GM23248 (cell line): ENCODE measurements at regions of chr7 and their contacts with region 1.

Region 1: GRCh38 chr7:76314042-76314721 is 11.7 kb downstream of the HSPB1 start:
- DNase-seq: peak; percentile 93
- H3K4me3 ChIP-seq: no peak overlapping the region
- H3K27ac ChIP-seq: no peak overlapping the region
- H3K4me1 ChIP-seq: peaks cover 5% of the 10 kb centered on the region; the same call in 1 of the 2 replicates
- H3K27me3 ChIP-seq: no peaks in the 10 kb centered on the region

Region 2: GRCh38 chr7:74388880-74389415 is 1925.2 kb before region 1 on chr7:
- in situ Hi-C with region 1: no loop called
- DNase-seq: no peak
- H3K4me3 ChIP-seq: no peak overlapping the region
- H3K27ac ChIP-seq: no peak overlapping the region
- H3K4me1 ChIP-seq: no peaks in the 10 kb centered on the region
- H3K27me3 ChIP-seq: no peaks in the 10 kb centered on the region

Region 3: DNA sequence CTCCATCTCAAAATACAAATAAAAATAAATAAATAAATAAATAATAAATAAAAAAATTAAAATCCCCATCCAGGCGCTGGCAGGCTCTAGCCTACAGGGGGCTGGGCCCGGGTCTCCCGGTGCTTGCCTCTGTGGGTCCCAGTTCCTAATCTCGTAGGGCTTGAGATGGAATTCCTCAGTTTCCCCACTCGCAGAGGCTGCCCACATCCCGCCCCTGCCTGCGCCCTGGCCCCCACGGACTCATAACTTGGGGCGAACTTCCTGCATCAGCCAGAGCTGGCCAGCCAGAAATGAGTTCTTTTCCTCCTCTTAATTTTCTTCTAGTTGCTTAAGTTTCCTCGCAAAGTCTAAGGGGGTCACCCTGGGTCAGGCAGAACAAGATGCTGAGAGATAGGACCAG is 134.5 kb before region 1 on chr7:
- in situ Hi-C with region 1: loop called (anchors 5 kb)
- DNase-seq: no peak
- H3K4me3 ChIP-seq: no peak overlapping the region
- H3K27ac ChIP-seq: no peak overlapping the region
- H3K4me1 ChIP-seq: no peaks in the 10 kb centered on the region
- H3K27me3 ChIP-seq: no peaks in the 10 kb centered on the region

Region 4: DNA sequence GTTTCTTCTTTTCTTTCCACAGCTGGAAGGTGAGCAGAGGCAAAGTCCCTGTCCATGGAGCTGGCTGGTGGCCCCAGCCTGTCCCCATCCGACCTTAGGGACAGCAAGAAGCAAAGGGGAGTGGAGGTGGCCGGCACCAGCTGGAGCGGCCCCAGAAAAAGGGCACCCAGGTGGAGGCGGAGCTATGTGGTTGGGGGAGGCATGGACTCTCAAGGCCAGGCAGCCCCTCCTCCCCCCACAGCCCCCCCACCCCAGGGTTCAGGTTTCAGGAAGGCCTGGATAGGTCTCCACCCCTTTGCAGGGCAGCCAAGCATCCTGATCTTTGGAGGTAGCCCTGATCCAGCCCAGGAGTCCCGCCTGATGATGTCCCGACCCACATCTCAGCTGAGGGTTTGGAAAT is 95.4 kb after region 1 on chr7 and contains the start of gene SSC4D:
- in situ Hi-C with region 1: no loop called
- DNase-seq: no peak
- H3K4me3 ChIP-seq: no peak within 1 kb of the TSS
- H3K27ac ChIP-seq: no peak within 1 kb of the TSS
- H3K4me1 ChIP-seq: no peaks in the 10 kb centered on the region
- H3K27me3 ChIP-seq: no peaks in the 10 kb centered on the region
- total RNA-seq, gene SSC4D: 0.43 TPM in 1 of 2 replicates, not detected in the other